ENCODE measurements at regions of chr11 and their contacts with region 1.

Region 1: GRCh38 chr11:83819933-83820549 is 533.9 kb upstream of the CCDC90B start:
- DNase-seq: peak in 1 of 2 experiments; percentile 59
- H3K4me3 ChIP-seq: no peak overlapping the region
- H3K27ac ChIP-seq: no peak overlapping the region
- H3K4me1 ChIP-seq: no peaks in the 10 kb centered on the region
- H3K27me3 ChIP-seq: no peaks in the 10 kb centered on the region
- CTCF ChIP-seq: peak; percentile 86

Region 2: GRCh38 chr11:82365351-82365750 is 1454.7 kb before region 1 on chr11:
- CTCF ChIA-PET with region 1: interaction called, 18 read pairs
- POLR2A ChIA-PET with region 1: no interaction called
- intact Hi-C with region 1: no loop called
- DNase-seq: no peak
- H3K4me3 ChIP-seq: no peak overlapping the region
- H3K27ac ChIP-seq: no peak overlapping the region
- H3K4me1 ChIP-seq: no peaks in the 10 kb centered on the region
- H3K27me3 ChIP-seq: no peaks in the 10 kb centered on the region
- CTCF ChIP-seq: no peak

Region 3: GRCh38 chr11:82867495-82868082 is 952.5 kb before region 1 on chr11:
- CTCF ChIA-PET with region 1: interaction called, 3 read pairs
- POLR2A ChIA-PET with region 1: no interaction called
- intact Hi-C with region 1: loop called (anchors 1 kb)
- DNase-seq: peak; percentile 48 to 69
- H3K4me3 ChIP-seq: no peak overlapping the region
- H3K27ac ChIP-seq: no peak overlapping the region
- H3K4me1 ChIP-seq: no peaks in the 10 kb centered on the region
- H3K27me3 ChIP-seq: no peaks in the 10 kb centered on the region
- CTCF ChIP-seq: peak; percentile 94

Region 4: DNA sequence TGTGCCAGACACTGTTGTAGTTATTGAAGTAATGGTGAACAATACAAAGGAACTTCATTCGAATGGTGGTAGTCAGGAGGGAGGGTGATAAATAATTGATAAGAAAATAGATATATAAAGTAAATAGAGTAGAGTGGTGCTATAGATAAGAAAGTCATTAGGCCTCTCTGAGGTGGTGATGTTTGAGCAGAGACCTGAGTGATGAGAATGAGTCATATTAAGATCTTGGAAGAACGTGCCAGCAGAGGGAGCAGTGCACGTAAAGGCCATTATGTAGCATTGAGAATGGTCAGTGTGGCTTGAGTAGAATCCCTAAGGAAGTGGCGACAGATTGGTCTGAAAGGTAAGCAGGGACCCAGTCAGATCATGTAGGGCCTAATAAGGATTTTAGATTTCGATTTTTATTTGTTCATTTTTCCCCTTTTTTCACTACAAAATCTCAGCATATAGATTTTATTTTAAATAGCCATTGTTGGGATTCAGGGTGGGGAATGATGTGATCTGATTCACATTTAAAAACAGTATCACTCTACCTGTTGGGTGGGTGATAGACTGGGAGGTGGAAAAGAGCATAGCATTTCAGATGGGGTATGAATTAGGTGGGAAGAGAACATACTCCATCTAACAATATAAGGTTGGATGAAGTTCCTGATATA is 578.6 kb before region 1 on chr11:
- CTCF ChIA-PET with region 1: no interaction called
- POLR2A ChIA-PET with region 1: no interaction called
- intact Hi-C with region 1: loop called (anchors 1 kb)
- DNase-seq: peak; percentile 32 to 68
- H3K4me3 ChIP-seq: no peak overlapping the region
- H3K27ac ChIP-seq: no peak overlapping the region
- H3K4me1 ChIP-seq: no peaks in the 10 kb centered on the region
- H3K27me3 ChIP-seq: no peaks in the 10 kb centered on the region
- CTCF ChIP-seq: peak; percentile 77

Region 5: GRCh38 chr11:83502041-83502440 is 318.0 kb before region 1 on chr11:
- CTCF ChIA-PET with region 1: no interaction called
- POLR2A ChIA-PET with region 1: no interaction called
- intact Hi-C with region 1: no loop called
- DNase-seq: peak in 1 of 2 experiments; percentile 33
- H3K4me3 ChIP-seq: no peak overlapping the region
- H3K27ac ChIP-seq: no peak overlapping the region
- H3K4me1 ChIP-seq: no peaks in the 10 kb centered on the region
- H3K27me3 ChIP-seq: no peaks in the 10 kb centered on the region
- CTCF ChIP-seq: no peak

Region 6: DNA sequence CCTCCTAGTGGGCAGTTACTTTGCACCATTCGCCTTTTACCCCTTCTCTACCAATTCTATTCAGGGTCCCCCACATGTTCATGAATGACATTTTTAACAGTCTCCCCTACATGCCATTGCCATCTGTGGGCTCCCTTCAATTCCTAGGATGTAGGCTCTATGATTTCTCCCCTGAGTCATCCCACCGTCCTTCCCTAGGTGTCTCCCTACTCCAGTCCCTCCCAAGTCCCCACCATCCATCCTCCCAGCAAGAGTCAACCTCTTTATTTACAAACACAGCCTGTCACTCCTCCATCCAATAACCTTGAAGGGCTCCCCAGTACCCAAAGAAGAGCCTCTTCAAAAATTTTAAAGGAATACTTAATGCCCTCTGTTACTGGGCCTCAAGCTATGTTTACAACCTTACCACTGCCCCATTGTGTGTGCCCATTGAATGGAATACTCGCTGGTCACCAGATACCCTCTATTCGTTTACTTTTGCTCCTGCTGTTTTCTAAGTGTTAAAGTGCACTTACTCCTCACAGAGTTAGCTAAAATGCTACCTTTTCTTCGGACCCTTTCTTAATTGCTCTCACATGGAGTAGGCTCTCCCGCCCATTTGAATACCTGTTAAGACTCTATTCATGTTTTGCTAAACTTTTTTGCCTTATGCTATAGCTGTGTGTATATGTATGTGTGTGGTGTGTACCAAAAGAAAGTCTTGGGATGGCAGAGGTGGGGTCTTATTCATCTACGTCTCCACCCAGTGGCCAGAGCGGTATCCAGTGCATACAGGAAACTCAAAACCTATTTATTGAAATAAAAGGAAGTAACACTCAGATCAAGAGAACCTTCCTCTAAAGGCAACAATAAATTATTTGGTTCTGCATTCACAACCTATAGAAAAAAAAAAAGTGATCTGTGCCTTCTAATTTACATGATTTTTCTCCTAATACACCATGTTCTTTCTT is 298.1 kb before region 1 on chr11:
- CTCF ChIA-PET with region 1: no interaction called
- POLR2A ChIA-PET with region 1: no interaction called
- intact Hi-C with region 1: loop called (anchors 1 kb)
- DNase-seq: peak in 1 of 2 experiments; percentile 20
- H3K4me3 ChIP-seq: no peak overlapping the region
- H3K27ac ChIP-seq: no peak overlapping the region
- H3K4me1 ChIP-seq: no peaks in the 10 kb centered on the region
- H3K27me3 ChIP-seq: no peaks in the 10 kb centered on the region
- CTCF ChIP-seq: no peak; the same call in 1 of the 2 replicates